PC-9 (cell line): ENCODE measurements at regions of chr1 and their contacts with region 1.

Region 1: GRCh38 chr1:95233737-95234500 is at the start of gene RWDD3:
- DNase-seq: peak; percentile 79 to 94
- H3K4me3 ChIP-seq: peak within 1 kb of the TSS; percentile 94
- H3K27ac ChIP-seq: 0 out of 2 replicates have a peak within 1 kb of the TSS, but pooled peaks have one; percentile 8
- H3K4me1 ChIP-seq: peaks cover 8% of the 10 kb centered on the region; the same call in 1 of the 2 replicates
- H3K27me3 ChIP-seq: no peaks in the 10 kb centered on the region
- CTCF ChIP-seq: peak; percentile 88
- total RNA-seq, gene RWDD3: 11.3 and 13.3 TPM in 2 replicates

Region 2: DNA sequence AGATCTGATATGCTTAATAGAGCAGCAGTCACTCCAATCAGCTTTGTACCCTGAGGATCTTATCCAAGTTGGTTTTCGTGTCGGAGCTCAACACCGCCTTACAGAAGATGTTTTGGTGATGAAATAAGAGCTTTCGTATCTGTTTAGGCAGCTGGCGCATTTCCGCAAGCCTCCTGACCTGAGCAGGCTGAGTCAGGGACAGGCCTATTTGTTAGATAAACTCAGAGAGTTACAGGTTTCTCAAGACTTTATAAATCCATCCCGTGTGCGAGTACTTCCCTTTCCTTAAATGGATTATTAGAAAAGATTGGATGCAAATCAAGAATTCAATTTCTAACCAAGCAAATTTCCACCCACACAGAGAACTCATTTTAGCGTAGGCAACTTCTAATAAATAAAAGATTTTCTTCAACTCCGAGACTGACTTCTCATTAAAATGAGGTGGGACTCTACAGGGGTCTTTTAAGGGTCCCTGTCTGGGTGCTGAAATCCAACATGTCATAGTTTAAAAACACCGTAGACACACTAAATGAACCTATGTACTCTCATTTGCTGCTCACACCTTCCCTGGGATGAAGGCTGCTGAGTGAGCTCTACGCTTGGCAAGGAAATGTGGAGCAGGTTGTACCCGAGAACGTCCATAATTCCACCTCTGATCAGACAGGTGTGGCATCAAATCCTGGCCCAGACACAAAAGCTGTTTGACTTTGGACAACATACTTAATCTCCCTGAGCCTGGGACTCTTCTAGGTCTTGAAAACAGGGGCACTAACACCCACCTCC is 585.5 kb before region 1 on chr1:
- CTCF ChIA-PET with region 1: no interaction called
- POLR2A ChIA-PET with region 1: interaction called, 12 read pairs
- intact Hi-C with region 1: no loop called
- DNase-seq: peak; percentile 79 to 100
- H3K4me3 ChIP-seq: peak overlapping the region; percentile 32; the same call in 1 of the 2 replicates
- H3K27ac ChIP-seq: peak overlapping the region; percentile 97
- H3K4me1 ChIP-seq: peaks cover 84% of the 10 kb centered on the region
- H3K27me3 ChIP-seq: no peaks in the 10 kb centered on the region
- CTCF ChIP-seq: no peak

Region 3: DNA sequence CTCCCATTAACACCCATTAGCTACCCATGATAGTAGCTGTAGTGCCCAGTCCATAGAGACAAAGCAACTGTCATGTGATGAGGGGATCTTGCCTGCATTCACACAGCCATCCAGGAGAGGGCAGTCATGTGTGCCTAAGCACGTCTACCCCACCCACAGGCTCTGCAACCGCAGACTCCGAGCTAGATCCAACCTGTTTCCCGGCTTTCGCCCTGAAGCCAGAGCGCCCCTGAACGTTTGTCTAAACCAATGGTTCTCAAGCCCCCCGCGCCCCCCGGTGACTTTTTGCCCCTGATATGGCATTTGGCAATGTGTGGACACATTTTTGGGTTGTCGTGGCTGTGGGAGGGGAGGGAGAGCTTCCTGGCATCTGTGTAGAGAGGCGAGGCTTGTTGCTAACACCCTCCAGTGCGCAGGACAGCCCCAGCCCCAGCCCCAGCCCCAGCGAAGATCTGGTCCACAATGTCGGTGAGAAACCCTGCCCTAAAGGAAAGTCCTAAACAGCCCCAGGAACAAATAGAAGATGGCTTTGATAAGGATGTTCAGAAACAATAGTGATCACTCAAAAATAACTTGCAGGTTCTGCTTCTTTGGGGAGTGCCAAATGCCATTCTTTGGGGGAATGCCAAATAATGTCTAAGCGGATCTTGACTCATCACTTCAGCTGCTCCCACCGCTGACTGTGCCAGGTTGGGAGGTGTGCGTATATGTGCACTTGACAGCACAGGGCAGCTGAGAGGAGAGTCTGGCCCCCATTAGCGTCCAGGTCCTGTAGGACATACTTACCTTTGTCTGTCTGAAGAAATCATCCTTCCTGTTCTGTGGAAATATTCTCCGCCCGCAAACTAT is 379.2 kb before region 1 on chr1:
- CTCF ChIA-PET with region 1: interaction called, 5 read pairs
- POLR2A ChIA-PET with region 1: no interaction called
- intact Hi-C with region 1: loop called (anchors 2 kb)
- DNase-seq: peak; percentile 86 to 99
- H3K4me3 ChIP-seq: peak overlapping the region; percentile 38; the same call in 1 of the 2 replicates
- H3K27ac ChIP-seq: peak overlapping the region; percentile 83
- H3K4me1 ChIP-seq: peaks cover 65% of the 10 kb centered on the region
- H3K27me3 ChIP-seq: no peaks in the 10 kb centered on the region
- CTCF ChIP-seq: peak; percentile 99

Region 4: GRCh38 chr1:95072532-95073419 is 161.1 kb before region 1 on chr1 and contains the start of gene ALG14:
- CTCF ChIA-PET with region 1: interaction called, 22 read pairs
- POLR2A ChIA-PET with region 1: interaction called, 11 read pairs
- intact Hi-C with region 1: loop called (anchors 2 kb)
- DNase-seq: peak; percentile 89 to 90
- H3K4me3 ChIP-seq: peak within 1 kb of the TSS; percentile 68
- H3K27ac ChIP-seq: peak within 1 kb of the TSS; percentile 38
- H3K4me1 ChIP-seq: peaks cover 6% of the 10 kb centered on the region
- H3K27me3 ChIP-seq: no peaks in the 10 kb centered on the region
- CTCF ChIP-seq: no peak
- total RNA-seq, gene ALG14: 7.7 and 8.6 TPM in 2 replicates

Region 5: DNA sequence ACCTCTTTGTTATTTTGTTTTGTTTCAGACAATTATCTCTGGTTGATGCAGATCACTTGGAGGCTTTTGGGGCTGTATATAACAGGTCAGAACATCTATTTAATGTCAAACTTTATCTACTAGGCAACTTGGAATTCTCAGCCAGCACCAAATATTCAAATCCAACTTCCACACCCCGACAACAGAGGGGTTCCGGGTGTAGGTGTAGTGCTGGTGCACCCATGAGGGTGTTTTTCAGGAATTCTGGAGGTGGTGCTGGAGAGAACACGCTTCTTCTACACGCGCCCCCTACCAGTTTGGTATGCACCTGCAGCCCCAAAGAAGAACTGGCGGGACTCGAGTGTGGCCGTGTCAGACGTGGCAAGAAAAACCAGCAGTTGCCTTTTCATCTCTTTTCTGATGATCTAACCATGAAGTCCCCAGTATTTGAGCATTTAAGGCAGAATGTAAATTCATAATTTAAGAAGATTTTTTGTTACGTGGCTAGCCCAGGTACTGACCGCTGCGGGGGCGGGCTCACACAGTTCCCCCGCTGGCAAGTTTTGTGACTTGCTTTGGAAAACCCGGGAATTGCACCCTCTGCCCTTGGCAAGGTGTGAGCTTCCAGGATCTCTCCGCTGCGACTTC is 117.2 kb before region 1 on chr1:
- CTCF ChIA-PET with region 1: interaction called, 13 read pairs
- POLR2A ChIA-PET with region 1: no interaction called
- intact Hi-C with region 1: loop called (anchors 2 kb)
- DNase-seq: peak; percentile 71 to 80
- H3K4me3 ChIP-seq: peak overlapping the region; percentile 83
- H3K27ac ChIP-seq: peak overlapping the region; percentile 23
- H3K4me1 ChIP-seq: peaks cover 29% of the 10 kb centered on the region
- H3K27me3 ChIP-seq: no peaks in the 10 kb centered on the region
- CTCF ChIP-seq: peak; percentile 92

Region 6: GRCh38 chr1:95265106-95265505 is 31.2 kb after region 1 on chr1:
- CTCF ChIA-PET with region 1: no interaction called
- POLR2A ChIA-PET with region 1: no interaction called
- intact Hi-C with region 1: no loop called
- DNase-seq: no peak
- H3K4me3 ChIP-seq: no peak overlapping the region
- H3K27ac ChIP-seq: no peak overlapping the region
- H3K4me1 ChIP-seq: no peaks in the 10 kb centered on the region
- H3K27me3 ChIP-seq: no peaks in the 10 kb centered on the region
- CTCF ChIP-seq: no peak

Region 7: DNA sequence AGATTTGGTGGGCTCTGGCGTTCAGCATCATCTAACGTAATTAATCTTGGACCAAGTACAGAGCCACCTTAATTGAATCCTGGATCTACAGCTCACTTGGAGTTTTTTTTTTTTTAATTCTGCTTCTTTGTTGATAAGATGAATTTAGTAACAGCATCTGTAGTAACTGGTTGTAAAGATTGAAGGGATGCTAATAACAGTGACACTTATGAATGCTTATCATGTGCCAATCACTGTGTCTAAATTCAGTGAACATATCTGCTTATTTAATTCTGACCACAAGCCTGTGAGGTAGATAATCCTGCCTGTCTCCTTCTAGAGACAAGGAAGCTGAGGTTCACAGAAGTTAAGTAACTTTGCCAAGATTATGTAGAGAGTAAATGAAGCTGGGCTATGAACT is 408.1 kb after region 1 on chr1:
- CTCF ChIA-PET with region 1: interaction called, 14 read pairs
- POLR2A ChIA-PET with region 1: no interaction called
- intact Hi-C with region 1: no loop called
- DNase-seq: no peak
- H3K4me3 ChIP-seq: no peak overlapping the region
- H3K27ac ChIP-seq: no peak overlapping the region
- H3K4me1 ChIP-seq: no peaks in the 10 kb centered on the region
- H3K27me3 ChIP-seq: no peaks in the 10 kb centered on the region
- CTCF ChIP-seq: no peak